Mammary epithelial cell (primary cell): ENCODE measurements at regions of chr22 and their contacts with region 1.

Region 1: GRCh38 chr22:39306581-39307361 is 12.7 kb downstream of the RPL3 start:
- DNase-seq: no peak
- H3K4me3 ChIP-seq: no peak overlapping the region
- H3K27ac ChIP-seq: no peak overlapping the region
- H3K4me1 ChIP-seq: peaks cover 36% of the 10 kb centered on the region
- H3K27me3 ChIP-seq: no peaks in the 10 kb centered on the region
- CTCF ChIP-seq: peak; percentile 39 to 54

Region 2: DNA sequence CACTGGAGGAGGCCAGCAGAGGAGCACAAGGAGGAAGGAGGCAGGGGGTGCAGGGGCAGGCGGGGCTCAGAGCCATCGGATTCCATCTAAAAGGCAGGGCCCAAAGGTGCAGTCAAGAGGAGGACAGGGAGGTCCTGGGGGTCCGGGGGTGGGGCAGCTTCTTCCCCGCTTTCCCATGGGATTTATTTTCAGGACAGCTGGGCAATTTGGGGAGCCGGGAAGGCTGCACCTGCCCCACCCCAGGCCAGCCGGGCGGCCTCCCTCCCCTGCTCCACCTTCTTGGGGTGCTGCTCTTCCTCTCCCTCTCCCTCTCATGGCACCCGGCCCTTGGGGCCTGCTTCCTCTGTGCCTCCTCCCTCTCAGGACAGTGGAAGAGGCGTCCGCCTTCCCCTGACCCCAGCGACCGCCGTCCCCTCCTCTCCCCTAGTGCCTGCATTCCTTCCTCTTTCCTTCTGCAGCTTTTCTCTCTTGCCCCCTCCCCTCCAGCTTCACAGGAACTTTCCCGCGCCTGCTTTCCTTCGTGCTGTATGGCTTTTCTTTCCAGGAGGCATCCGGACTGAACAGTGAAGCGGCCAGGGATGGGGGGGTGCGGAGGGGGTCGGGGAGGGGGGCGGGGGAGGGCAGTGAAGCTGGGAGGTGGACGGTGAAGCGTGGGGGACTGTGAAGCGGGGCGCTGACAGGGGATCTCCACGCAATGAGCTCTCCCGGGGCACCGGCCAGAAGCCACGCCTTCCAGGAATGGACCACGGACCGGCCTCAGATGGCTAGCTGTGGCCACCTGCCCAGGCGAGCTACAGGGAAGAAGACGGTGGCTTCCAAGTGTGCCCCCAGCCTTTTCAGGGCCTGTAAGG is 182.8 kb before region 1 on chr22:
- CTCF ChIA-PET with region 1: interaction called, 14 read pairs
- dilution Hi-C with region 1: no loop called
- in situ Hi-C with region 1: no loop called
- intact Hi-C with region 1: no loop called
- DNase-seq: no peak
- H3K4me3 ChIP-seq: no peak overlapping the region
- H3K27ac ChIP-seq: no peak overlapping the region
- H3K4me1 ChIP-seq: no peaks in the 10 kb centered on the region
- H3K27me3 ChIP-seq: no peaks in the 10 kb centered on the region
- CTCF ChIP-seq: no peak

Region 3: DNA sequence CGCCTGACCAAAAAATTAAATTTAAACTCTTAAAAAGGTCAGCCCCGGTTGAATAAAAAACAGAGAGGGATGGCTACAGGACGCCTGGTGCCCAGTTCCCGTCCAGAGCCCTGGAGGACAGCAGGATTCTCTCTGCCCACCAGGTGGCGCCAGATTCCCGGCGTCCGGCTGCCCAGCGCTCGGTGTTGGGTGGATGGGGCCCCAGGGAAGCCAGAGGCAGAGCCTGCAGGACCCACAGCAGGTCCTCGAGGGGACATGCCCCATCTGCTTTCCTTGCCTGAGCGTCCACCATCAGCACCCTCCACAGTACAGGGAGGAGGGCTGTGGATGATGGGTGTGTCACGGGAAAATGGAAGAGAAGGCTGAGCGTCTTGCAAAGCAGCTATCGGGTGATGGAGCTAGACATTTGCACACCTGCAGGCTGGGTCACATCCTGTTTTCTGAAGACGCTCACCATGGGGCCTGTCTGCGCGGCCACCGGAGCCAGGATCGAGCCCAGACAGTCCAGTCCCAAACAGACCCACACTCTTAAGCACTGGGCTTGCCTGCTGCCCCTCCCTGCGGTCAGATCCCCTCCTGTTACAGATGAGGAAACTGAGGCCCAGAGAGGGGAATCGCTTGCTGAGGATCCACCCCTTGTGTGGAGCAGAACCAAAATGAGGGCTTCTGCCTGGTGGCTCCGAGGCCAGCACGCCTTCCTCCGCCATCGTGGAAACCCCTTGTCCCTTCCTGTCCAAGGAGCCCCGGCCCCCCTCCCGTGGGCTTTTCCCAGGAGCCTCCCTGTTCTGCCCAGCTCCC is 135.7 kb before region 1 on chr22:
- CTCF ChIA-PET with region 1: interaction called, 3 read pairs
- dilution Hi-C with region 1: no loop called
- in situ Hi-C with region 1: loop called (anchors 5 kb)
- intact Hi-C with region 1: loop called (anchors 1 kb)
- DNase-seq: peak; percentile 69
- H3K4me3 ChIP-seq: no peak overlapping the region
- H3K27ac ChIP-seq: no peak overlapping the region
- H3K4me1 ChIP-seq: peaks cover 31% of the 10 kb centered on the region
- H3K27me3 ChIP-seq: no peaks in the 10 kb centered on the region
- CTCF ChIP-seq: peak; percentile 70 to 94

Region 4: DNA sequence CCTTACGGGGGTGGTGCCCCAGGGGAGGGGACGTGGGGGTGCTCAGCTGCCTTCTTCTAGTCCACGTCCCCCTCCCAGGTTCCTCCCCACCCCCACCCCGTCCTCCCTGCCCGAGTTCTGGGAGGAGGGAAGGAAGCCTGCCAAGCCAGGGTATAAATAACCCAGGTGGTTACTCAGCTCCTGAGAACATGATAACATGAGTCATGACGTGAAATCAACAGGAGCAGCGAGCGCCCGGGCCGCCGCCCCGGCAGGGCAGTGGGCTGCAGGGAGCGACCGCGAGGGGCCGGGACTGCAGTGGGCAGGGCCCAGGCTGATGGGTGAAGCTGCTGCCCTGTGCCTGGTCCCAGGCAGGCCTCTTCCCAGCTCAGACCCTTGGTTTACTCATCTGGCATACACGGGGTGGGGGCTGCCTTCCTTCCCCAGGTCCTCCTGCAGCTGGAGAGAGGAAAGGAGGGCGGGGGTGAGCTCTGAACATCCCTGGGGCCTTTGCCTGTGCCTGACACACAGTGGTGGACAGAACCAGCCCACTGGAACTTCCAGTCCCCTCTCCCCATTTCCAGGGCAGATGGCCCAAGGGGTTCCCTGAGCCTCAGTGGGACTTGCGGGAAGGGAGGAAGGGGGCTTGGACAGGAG is 53.2 kb before region 1 on chr22:
- CTCF ChIA-PET with region 1: no interaction called
- dilution Hi-C with region 1: no loop called
- in situ Hi-C with region 1: no loop called
- intact Hi-C with region 1: loop called (anchors 2 kb)
- DNase-seq: peak; percentile 82
- H3K4me3 ChIP-seq: peak overlapping the region in 2 of 3 experiments; percentile 17 to 24
- H3K27ac ChIP-seq: no peak overlapping the region
- H3K4me1 ChIP-seq: peaks cover 37% of the 10 kb centered on the region
- H3K27me3 ChIP-seq: no peaks in the 10 kb centered on the region
- CTCF ChIP-seq: no peak

Region 5: GRCh38 chr22:39360674-39361413 is 54.1 kb after region 1 on chr22:
- CTCF ChIA-PET with region 1: no interaction called
- dilution Hi-C with region 1: no loop called
- in situ Hi-C with region 1: no loop called
- intact Hi-C with region 1: no loop called
- DNase-seq: peak; percentile 72
- H3K4me3 ChIP-seq: no peak overlapping the region
- H3K27ac ChIP-seq: no peak overlapping the region
- H3K4me1 ChIP-seq: peaks cover 6% of the 10 kb centered on the region
- H3K27me3 ChIP-seq: no peaks in the 10 kb centered on the region
- CTCF ChIP-seq: no peak